Heart right ventricle (tissue), 16 donors: ENCODE measurements at regions of chr16 and their contacts with region 1.

Region 1: DNA sequence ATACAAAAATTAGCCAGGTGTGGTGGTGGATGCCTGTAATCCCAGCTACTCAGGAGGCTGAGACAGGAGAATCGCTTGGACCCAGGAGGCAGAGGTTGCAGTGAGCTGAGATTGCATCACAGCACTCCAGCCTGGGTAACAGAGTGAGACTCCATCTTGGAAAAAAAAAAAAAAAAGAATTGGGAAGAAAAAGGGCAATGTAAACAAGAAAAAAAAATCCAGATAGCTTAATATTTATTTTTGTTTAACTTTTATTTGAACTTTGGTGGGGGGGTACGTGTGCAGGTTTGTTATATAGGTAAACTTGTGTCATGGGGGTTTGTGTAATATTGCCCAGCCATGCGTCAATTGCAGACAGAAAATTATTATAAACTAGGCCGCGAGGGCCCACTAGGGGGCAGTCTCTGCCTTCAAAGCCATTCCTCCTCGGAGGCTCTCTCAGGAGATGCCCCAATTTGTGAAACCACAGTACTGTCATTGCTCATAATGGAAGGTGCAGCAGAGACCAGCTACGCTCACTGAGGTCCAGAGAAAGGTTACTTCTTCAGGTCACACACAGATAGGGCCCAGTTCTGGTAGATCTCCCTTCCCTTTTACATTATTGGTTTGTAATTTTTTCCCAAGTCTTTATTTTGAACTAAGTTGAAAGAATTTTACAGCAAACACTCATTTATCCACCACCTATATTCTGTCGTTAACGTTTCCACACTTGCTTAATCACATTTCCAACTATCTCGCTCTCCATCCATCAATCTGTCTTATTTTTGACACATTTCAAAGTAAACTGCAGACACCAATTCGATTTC is 206.2 kb downstream of the PRKCB start:
- DNase-seq: peak; percentile 50 to 56
- ATAC-seq: peak in 3 of 8 donors; percentile 44 to 58 (median 54)
- H3K4me3 ChIP-seq: no peak overlapping the region
- H3K27ac ChIP-seq: no peak overlapping the region
- H3K4me1 ChIP-seq: no peaks in the 10 kb centered on the region
- H3K27me3 ChIP-seq: peaks cover 0 to 24% (median 0%) of the 10 kb centered on the region in 7 donors
- CTCF ChIP-seq: peak; percentile 49 to 79 (median 69)

Region 2: GRCh38 chr16:23930791-23931190 is 111.2 kb before region 1 on chr16:
- intact Hi-C with region 1: no loop called
- DNase-seq: no peak
- ATAC-seq: no peak
- H3K4me3 ChIP-seq: no peak overlapping the region
- H3K27ac ChIP-seq: no peak overlapping the region
- H3K4me1 ChIP-seq: no peaks in the 10 kb centered on the region
- H3K27me3 ChIP-seq: peaks cover 0 to 5% (median 0%) of the 10 kb centered on the region in 7 donors
- CTCF ChIP-seq: no peak

Region 3: DNA sequence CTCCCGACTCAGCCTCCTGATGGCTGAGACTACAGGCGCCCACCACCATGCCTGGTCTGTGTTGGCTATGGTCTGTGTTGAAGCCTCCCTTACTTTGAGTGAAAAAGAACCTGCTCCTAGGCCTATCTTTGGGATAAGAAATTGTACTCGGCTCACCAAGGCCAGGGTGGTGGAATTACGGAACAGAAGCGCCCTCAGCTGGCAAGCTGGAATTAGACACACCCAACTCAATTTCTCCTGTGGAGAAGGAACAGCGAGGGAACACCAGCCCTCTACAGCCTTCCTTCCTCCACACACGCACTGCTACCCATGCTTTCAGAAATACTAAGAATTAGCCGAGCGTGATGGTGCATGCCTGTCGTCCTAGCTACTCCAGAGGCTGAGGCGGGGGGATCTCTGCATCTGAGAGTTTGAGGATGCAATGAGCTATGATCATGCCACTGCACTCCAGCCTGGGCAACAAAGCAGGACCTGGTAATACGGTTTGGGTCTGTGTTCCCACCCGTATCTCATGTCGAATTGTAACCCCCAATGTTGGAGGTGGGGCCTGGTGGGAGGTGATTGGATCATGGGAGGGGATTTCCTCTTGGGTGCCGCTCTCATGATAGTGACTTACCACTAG is 457.3 kb after region 1 on chr16:
- intact Hi-C with region 1: loop called (anchors 2 to 5 kb)
- DNase-seq: no peak
- ATAC-seq: peak in 2 of 8 donors; percentile 30 to 35
- H3K4me3 ChIP-seq: no peak overlapping the region
- H3K27ac ChIP-seq: no peak overlapping the region
- H3K4me1 ChIP-seq: no peaks in the 10 kb centered on the region
- H3K27me3 ChIP-seq: peaks cover 0 to 37% (median 24%) of the 10 kb centered on the region in 7 donors
- CTCF ChIP-seq: peak in 6 of 9 donors; percentile 30 to 46 (median 41)

Region 4: DNA sequence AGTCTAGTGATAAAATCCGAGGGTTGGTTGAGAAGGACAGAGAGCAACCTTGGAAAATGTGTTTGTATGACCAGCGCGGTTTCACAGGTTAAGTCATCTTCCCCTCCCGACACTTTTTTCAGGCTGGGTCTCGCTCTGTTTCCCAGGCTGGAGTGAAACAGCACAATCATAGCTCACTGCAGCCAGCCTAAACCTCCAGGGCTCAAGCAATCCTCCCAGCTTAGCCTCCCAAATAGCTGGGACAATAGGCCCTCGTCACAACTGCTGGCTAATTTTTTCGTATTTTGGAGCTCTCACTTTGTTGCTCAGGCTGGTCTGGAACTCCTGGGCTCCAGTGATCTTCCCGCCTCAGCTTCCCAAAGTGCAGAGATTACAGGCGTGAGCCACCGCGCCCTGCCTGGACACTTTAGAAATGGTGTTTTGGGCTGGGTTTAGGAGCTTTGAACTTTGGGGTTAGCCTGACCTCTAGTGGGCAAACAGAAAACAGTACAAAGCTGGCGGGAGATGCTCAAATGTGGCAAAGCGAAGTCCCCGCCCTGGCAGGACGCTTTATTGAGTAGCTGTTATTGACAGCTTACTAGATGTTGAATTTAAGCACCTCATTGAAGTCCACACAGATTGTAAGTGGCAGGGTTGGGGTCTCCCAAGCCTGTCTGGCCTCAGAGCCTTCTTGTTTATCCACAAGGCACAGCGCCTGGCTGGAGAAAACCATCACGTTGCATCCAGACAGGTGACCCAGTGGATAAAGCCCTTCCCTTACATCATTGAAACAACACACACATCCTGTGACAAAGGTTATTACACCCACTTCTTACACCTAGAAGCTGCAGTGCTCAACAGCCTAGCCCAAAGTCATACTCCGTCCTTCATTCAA is 462.7 kb after region 1 on chr16:
- intact Hi-C with region 1: loop called (anchors 2 to 5 kb)
- DNase-seq: peak; percentile 15 to 48
- ATAC-seq: peak; percentile 55 to 88 (median 71)
- H3K4me3 ChIP-seq: no peak overlapping the region
- H3K27ac ChIP-seq: no peak overlapping the region
- H3K4me1 ChIP-seq: no peaks in the 10 kb centered on the region
- H3K27me3 ChIP-seq: peaks cover 0 to 47% (median 37%) of the 10 kb centered on the region in 7 donors
- CTCF ChIP-seq: peak; percentile 62 to 82 (median 76)